Dorsolateral prefrontal cortex (tissue), 120 donors: ENCODE measurements at regions of chr19 and their contacts with region 1.

Region 1: DNA sequence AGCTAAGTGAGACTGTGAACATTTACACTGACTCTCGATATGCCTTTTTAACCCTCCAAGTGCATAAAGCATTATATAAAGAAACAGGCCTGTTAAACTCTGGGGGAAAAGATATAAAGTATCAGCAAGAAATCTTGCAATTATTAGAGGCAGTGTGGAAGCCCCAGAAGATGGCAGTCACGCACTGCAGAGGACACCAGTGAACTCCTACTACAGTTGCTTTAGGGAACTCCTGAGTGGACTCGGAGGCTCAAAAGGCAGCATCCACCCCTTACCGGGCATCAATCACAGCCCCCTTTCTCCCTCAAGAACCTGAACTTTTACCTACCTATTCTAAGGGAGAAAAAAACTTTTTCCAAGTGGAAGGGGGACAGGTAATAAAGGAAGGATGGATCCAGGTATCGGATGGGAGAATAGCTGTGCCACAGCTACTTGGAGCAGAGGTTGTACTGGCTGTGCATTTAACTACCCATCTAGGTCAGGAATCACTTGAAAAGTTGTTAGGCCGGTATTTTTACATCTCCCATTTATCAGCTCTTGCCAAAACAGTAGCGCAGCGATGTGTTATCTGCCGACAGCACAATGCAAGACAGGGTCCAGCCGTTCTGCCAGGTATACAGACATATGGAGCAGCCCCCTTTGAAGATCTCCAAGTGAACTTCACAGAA is 80.1 kb downstream of the ZNF486 start:
- DNase-seq: peak; percentile 36 to 82 (median 58)
- H3K4me3 ChIP-seq: peak overlapping the region in 1 of 59 donors; percentile 3
- H3K27ac ChIP-seq: no peak overlapping the region
- H3K27me3 ChIP-seq: no peaks in the 10 kb centered on the region
- CTCF ChIP-seq: peak; percentile 13 to 95 (median 70)

Region 2: DNA sequence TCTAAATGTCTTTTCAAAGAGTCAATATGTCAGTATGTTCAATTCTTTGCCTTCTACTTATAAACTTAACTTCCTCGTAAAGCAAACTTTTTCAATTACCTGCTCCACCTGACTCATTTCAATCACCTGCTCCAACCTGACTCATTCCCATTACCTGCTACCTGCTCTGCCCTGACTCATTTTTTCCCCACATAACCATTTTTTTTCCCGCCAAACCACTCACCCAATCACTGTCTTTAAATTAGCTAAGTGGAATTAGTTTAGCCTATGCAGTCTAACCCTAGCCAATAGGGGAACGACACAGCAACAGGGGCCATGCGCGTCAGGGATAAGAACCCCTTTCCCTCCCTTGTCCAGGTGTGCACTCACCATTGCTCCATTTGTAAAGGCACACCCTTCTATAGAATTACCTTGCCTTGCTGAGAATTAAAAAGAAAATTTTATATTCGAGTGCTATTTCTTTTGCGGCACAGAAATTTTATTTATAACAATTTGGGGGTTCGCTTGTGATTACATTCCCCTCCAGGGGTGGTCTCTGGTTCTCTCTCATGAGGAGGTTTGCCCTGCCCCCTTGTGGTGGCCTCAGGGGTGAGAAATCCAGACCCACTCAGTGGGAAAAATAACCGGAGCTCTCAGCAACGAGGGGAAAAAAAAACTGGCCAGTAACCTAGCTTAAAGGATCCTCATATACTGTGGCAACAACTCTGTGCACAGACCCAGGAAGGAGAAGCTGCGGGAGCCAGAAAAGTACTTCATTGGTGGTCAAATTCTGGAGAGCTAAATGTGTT is 113.0 kb after region 1 on chr19:
- intact Hi-C with region 1: loop called (anchors 1 to 2 kb)
- DNase-seq: peak in 8 of 10 donors; percentile 6 to 65 (median 46)
- H3K4me3 ChIP-seq: peak overlapping the region in 5 of 59 donors; percentile 21 to 41 (median 24)
- H3K27ac ChIP-seq: peak overlapping the region in 11 of 59 donors; percentile 5 to 72 (median 33)
- H3K27me3 ChIP-seq: no peaks in the 10 kb centered on the region
- CTCF ChIP-seq: peak in 54 of 56 donors; percentile 28 to 79 (median 64)

Region 3: GRCh38 chr19:20513179-20513934 is 266.2 kb after region 1 on chr19:
- intact Hi-C with region 1: loop called (anchors 5 to 10 kb)
- DNase-seq: no peak
- H3K4me3 ChIP-seq: no peak overlapping the region
- H3K27ac ChIP-seq: no peak overlapping the region
- H3K27me3 ChIP-seq: no peaks in the 10 kb centered on the region
- CTCF ChIP-seq: peak in 30 of 56 donors; percentile 7 to 64 (median 26)

Region 4: GRCh38 chr19:20661150-20661819 is 414.1 kb after region 1 on chr19 and contains the start of gene ZNF626:
- intact Hi-C with region 1: loop called in 1 of 2 experiments (anchors 10 kb)
- DNase-seq: peak; percentile 90 to 98 (median 96)
- H3K4me3 ChIP-seq: peak within 1 kb of the TSS; percentile 59 to 94 (median 81)
- H3K27ac ChIP-seq: peak within 1 kb of the TSS in 56 of 59 donors; percentile 39 to 92 (median 80)
- H3K27me3 ChIP-seq: no peaks in the 10 kb centered on the region
- CTCF ChIP-seq: peak in 6 of 56 donors; percentile 11 to 18 (median 14)
- total RNA-seq, gene ZNF626: 11.7 to 26.9 (median 18.8) TPM

Region 5: GRCh38 chr19:21020298-21021227 is 773.4 kb after region 1 on chr19 and contains the start of gene ZNF430:
- intact Hi-C with region 1: loop called in 1 of 2 experiments (anchors 10 kb)
- DNase-seq: peak; percentile 89 to 98 (median 96)
- H3K4me3 ChIP-seq: peak within 1 kb of the TSS; percentile 43 to 99 (median 86)
- H3K27ac ChIP-seq: peak within 1 kb of the TSS in 55 of 59 donors; percentile 4 to 90 (median 83)
- H3K27me3 ChIP-seq: no peaks in the 10 kb centered on the region
- CTCF ChIP-seq: peak in 2 of 56 donors; percentile 4 to 16
- total RNA-seq, gene ZNF430: 11.2 to 32.5 (median 22.0) TPM